GM13976 (cell line): ENCODE measurements at regions of chr11 and their contacts with region 1.

Region 1: DNA sequence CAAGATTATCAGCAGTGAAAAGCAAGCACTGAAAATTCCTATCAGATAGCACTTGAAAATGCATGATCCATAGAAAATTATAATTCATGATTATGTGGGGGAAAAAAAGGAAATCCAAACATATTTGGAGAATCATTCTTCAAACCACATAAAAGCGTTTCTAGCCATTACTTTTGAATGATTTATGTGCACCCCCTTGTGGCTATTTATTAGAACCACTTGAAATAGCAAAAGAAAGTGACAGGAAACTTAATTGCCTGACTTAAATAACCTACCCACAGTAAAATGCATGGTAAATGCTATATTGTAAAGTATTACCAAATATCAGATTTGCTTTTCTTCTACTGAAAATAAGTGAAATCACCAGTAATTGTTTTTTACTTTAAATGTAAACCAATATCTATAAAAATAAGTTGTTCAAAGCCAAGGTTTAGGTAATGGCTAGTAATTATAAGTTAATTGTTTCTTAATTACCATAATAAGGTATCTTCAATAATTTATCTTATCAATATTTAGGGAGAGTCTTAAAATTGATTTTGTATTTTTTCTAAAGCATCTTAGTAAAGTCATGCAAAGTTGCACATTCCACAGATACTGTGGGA is 168.5 kb downstream of the ARHGAP42 start:
- DNase-seq: no peak
- CTCF ChIP-seq: peak; percentile 22

Region 2: GRCh38 chr11:100575870-100576705 is 279.5 kb before region 1 on chr11:
- in situ Hi-C with region 1: loop called (anchors 25 kb)
- DNase-seq: peak; percentile 35
- CTCF ChIP-seq: peak; percentile 58

Region 3: GRCh38 chr11:100687630-100688395 is 167.8 kb before region 1 on chr11:
- in situ Hi-C with region 1: loop called (anchors 25 kb)
- DNase-seq: peak; percentile 69
- CTCF ChIP-seq: peak; percentile 45

Region 4: GRCh38 chr11:101401245-101401644 is 545.7 kb after region 1 on chr11:
- in situ Hi-C with region 1: no loop called
- DNase-seq: no peak
- CTCF ChIP-seq: no peak